ENCODE measurements at regions of chr11 and their contacts with region 1.

Region 1: DNA sequence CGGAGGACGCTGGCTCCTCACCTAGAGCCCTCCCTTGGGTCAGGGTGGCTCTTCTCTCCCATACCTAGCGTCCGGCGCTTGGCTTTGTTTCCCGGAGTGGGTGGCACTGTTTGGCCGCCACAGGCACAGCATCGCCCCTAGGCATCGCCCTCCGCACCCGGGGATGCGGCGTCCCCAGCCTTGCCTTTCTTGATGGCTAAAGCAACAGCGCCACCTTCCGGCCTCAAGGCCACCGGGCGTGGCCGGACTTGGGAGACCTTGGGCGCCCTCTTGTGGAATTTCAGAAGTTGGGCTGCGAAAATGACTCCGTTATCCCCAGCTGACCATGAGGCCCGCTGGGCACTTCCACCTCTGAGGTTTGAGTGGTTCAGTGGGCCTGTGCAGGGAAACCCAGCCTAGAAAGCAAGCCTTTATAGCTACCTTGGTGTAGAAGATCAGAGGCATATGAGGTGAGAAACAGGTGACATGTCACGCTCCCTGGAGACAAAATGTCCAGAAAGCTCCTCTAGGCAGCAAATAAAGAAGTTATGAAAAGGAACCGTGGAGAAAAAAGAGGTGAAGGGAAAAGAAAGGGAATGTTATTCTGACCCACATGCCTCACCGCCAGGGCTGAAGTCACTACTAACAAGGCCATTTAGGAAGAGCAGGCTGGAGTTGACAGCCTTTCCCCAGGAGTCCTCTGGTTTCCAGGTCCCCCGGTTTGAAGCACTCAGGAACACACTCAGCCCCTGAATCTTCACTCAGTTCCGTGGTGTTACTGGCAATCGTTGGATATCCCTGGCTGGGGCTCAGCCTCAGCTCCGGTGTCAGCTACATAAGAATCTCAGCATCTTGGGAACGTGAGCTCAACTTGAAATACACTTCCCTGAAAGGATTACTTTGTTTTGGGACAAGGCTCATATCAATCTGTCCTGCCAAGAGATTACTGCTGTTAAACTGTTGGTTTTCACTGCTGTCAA is 54.1 kb downstream of the SNX19 start:
- DNase-seq: peak; percentile 74 to 96

Region 2: DNA sequence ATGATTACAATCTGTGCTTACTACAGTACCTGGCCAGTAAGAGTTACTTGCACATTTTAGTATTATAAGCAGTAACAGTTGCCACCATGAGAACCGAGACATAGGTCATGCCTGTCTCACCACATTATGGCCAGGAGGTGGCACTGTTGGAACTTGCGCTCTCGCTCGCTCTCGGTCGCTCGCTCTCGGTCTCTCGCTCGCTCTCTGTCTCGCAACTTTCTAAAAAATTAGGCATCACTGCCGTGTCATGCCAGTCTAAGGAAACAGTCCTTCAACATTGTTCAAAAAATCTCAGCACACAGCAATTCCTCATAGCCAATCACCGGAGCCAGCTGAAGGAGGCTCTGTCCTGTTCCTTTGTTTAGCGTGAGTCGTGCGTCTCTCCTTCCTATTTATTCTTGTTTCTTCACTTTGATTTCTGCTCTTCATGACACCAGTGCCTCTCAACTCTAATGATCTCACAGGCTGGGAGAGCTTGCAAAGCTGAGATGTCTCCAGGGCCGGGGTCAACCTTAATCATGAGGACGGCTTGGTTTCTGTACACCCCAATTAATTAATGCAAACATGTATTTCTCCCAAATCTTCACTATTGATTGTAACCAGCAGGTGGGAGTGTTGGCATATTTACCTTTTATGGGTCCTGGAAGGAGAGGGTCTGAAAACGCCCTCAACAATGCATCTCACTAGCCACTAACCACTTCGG is 427.5 kb before region 1 on chr11:
- in situ Hi-C with region 1: loop called (anchors 25 kb)
- DNase-seq: peak; percentile 84 to 93